CD4-positive, alpha-beta T cell (primary cell): ENCODE measurements at regions of chr7 and their contacts with region 1.

Region 1: DNA sequence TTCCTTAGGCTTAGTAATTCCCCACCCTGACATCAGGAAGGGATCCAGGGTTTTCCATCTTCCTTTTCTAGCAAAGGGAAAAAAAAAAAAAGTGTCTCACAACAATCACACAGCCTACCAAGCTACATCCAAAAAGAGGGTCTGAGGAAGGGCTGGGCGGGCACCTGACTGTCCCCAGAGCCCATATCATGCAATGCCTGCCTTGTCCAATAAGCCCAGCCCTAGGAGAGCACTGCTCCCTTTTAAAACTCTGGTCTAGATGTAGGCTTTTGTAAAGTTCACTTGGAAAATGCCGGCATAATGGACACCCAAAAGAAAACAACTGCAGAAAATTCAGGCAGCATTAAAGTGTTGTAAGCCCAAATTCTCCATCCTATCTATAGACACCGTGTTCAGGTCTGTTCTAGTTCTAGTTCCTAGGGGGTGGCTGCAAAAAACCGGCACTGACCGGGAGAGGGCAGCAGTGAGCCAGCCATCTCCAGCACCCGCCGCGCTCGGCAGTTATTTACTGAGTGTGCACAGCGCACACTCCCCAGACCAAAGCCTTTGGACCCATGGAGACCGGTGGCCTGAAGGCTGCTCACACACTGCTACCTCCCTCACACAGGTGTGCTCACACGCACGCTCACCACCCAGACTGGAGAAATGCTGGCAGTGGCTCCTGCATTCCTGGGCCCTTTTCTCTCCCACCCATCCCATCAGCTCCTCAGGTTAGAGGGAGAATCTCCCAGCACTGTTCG is 48.7 kb downstream of the PODXL start:
- DNase-seq: peak; percentile 69 to 88 (median 76)
- ATAC-seq: peak; percentile 96
- H3K4me3 ChIP-seq: no peak overlapping the region
- H3K4me3 Mint-ChIP-seq: peak overlapping the region; percentile 17
- H3K27ac ChIP-seq: no peak overlapping the region
- H3K27ac Mint-ChIP-seq: no peak overlapping the region
- H3K4me1 ChIP-seq: peaks cover 23% of the 10 kb centered on the region
- H3K4me1 Mint-ChIP-seq: peaks cover 25% of the 10 kb centered on the region
- H3K27me3 ChIP-seq: no peaks in the 10 kb centered on the region
- H3K27me3 Mint-ChIP-seq: peaks cover 25% of the 10 kb centered on the region
- CTCF ChIP-seq: peak; percentile 85

Region 2: DNA sequence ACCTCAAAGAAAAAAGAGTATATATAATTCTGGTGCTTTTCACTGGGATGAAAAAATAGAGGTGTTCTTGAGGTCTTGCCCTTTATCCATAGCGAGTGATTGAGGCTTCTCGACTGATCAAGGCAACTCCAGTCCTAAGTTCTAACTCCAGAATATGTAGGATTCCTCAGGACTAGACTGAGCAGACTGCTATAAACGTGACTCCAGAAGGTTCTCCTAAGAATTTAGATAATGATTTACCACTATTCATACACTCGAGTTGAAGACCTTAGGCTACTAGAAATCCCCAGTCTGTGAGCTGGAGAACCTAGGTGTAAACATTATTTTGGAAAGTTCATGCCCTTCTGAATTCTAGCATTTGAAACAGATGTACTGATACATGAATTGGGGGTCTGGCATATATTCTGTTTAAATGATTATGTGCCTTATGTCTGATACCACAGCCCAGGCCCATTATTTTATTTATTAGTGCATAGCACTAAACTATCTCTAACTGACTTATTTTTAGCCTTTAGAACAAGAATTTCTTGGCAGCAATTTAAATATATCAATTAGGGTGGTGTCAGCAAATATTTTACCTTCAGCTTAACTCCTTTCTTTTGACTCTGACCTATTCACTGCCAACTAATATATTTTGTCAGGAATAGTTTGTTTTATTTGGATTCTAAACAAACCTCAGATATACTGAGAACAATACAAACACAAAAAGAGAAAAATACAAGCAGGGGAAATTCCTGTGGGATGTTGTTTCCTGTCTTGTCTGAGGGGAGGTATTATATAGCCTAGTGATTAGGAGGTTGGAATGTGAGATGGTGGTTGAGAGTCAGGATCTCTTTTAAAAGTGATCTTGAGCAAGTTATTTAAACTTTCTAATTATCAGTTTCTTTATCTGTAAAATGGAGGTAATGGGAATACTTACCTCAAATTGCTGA is 27.1 kb before region 1 on chr7:
- CTCF ChIA-PET with region 1: no interaction called
- POLR2A ChIA-PET with region 1: no interaction called
- intact Hi-C with region 1: no loop called
- DNase-seq: no peak
- ATAC-seq: no peak
- H3K4me3 ChIP-seq: no peak overlapping the region
- H3K4me3 Mint-ChIP-seq: no peak overlapping the region
- H3K27ac ChIP-seq: no peak overlapping the region
- H3K27ac Mint-ChIP-seq: no peak overlapping the region
- H3K4me1 ChIP-seq: no peaks in the 10 kb centered on the region
- H3K4me1 Mint-ChIP-seq: no peaks in the 10 kb centered on the region
- H3K27me3 ChIP-seq: no peaks in the 10 kb centered on the region
- H3K27me3 Mint-ChIP-seq: no peaks in the 10 kb centered on the region
- CTCF ChIP-seq: no peak

Region 3: DNA sequence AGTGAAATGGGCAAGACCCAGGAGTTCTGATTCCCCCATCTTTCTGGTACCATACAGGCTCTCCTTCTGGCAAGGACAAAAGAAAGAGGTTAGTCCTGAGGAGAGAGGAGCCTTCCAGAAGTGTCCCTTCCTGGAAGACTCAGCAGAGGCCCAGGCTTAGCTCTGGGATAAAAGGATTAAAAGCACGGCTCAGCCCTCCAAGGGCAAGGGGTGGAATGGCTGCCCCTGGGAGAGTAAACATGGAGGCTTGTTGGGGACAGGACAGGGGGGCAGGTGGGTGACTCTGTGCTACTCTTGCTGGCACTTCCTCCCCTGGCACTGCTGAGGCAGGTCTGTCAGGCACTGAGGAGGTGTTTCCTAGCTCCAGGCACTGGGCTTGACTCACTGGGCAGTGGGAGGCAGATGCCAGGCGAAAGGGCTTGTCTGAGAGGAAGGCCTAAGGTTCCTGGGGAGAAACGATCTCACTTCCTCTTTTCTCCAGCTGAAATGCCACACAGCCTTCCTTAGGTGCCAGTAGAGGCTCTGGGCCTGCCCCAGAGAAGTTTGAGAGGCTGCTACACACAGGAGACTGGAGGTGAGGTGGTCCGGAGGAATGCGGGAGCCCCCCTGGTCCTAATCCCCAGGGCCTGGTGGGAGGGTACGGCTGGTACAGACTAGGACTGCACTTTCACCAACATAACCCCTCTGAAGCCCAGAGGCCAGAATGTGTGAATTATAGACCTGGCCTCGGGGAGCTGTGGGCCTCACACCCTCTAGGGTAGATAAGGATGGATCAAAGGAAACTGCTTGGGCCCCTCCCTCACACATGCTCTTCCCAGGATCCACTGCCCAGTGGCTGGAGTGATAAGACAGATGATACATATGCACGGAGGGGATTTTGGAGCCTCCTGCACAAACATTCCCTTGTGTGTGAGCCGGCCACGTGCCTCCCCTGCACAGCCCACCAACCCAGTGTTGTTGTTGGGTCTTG is 111.9 kb after region 1 on chr7:
- CTCF ChIA-PET with region 1: no interaction called
- POLR2A ChIA-PET with region 1: no interaction called
- intact Hi-C with region 1: no loop called
- DNase-seq: peak in 1 of 14 experiments; percentile 8
- ATAC-seq: no peak
- H3K4me3 ChIP-seq: no peak overlapping the region
- H3K4me3 Mint-ChIP-seq: no peak overlapping the region
- H3K27ac ChIP-seq: no peak overlapping the region
- H3K27ac Mint-ChIP-seq: no peak overlapping the region
- H3K4me1 ChIP-seq: no peaks in the 10 kb centered on the region
- H3K4me1 Mint-ChIP-seq: no peaks in the 10 kb centered on the region
- H3K27me3 ChIP-seq: no peaks in the 10 kb centered on the region
- H3K27me3 Mint-ChIP-seq: peaks cover 15% of the 10 kb centered on the region
- CTCF ChIP-seq: no peak

Region 4: GRCh38 chr7:131642429-131642828 is 134.7 kb after region 1 on chr7:
- CTCF ChIA-PET with region 1: no interaction called
- POLR2A ChIA-PET with region 1: no interaction called
- intact Hi-C with region 1: no loop called
- DNase-seq: no peak
- ATAC-seq: no peak
- H3K4me3 ChIP-seq: no peak overlapping the region
- H3K4me3 Mint-ChIP-seq: no peak overlapping the region
- H3K27ac ChIP-seq: no peak overlapping the region
- H3K27ac Mint-ChIP-seq: no peak overlapping the region
- H3K4me1 ChIP-seq: no peaks in the 10 kb centered on the region
- H3K4me1 Mint-ChIP-seq: no peaks in the 10 kb centered on the region
- H3K27me3 ChIP-seq: peaks cover under 1 to 3% of the 10 kb centered on the region in 2 experiments
- H3K27me3 Mint-ChIP-seq: peaks cover 6% of the 10 kb centered on the region
- CTCF ChIP-seq: no peak

Region 5: GRCh38 chr7:131654668-131655326 is 147.0 kb after region 1 on chr7:
- CTCF ChIA-PET with region 1: no interaction called
- POLR2A ChIA-PET with region 1: no interaction called
- intact Hi-C with region 1: loop called (anchors 1 to 2 kb)
- DNase-seq: peak; percentile 59 to 85 (median 76)
- ATAC-seq: peak; percentile 80
- H3K4me3 ChIP-seq: no peak overlapping the region
- H3K4me3 Mint-ChIP-seq: no peak overlapping the region
- H3K27ac ChIP-seq: no peak overlapping the region
- H3K27ac Mint-ChIP-seq: no peak overlapping the region
- H3K4me1 ChIP-seq: peaks cover 3% of the 10 kb centered on the region
- H3K4me1 Mint-ChIP-seq: no peaks in the 10 kb centered on the region
- H3K27me3 ChIP-seq: no peaks in the 10 kb centered on the region
- H3K27me3 Mint-ChIP-seq: peaks cover 7% of the 10 kb centered on the region
- CTCF ChIP-seq: peak; percentile 83